Head of caudate nucleus (tissue), 42 donors: ENCODE measurements at regions of chr1 and their contacts with region 1.

Region 1: DNA sequence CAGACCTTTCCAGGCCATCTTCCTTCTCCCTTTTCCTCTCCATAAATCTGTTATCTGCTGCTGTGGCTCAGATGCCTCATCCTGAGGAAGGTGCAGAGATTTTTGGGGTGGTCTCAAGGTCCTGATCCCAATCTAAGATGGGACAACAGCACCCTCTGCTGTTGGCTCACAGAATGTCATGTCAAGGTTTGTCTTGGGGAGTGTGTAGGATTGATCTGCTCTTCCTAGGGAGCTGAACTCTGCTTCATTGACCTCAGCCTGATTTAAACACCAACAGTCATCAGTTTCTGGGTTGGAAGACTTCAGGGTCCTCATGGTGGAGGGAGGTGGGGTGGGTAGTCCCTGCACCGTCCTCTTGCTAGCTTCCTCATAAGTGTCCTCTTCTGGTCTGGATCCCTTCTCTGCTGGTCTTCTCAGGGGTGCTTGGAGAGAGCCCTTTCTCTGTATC is 62.8 kb upstream of the LAX1 start:
- DNase-seq: peak in 41 of 42 donors; percentile 28 to 91 (median 73)

Region 2: GRCh38 chr1:203504397-203505250 is 197.5 kb before region 1 on chr1:
- intact Hi-C with region 1: loop called (anchors 2 kb)
- DNase-seq: peak; percentile 51 to 94 (median 83)

Region 3: GRCh38 chr1:203581841-203582240 is 120.3 kb before region 1 on chr1:
- intact Hi-C with region 1: no loop called
- DNase-seq: peak in 4 of 42 donors; percentile 24 to 70 (median 28)